Cardiac septum (tissue), 1 donor: ENCODE measurements at regions of chr17 and their contacts with region 1.

Region 1: DNA sequence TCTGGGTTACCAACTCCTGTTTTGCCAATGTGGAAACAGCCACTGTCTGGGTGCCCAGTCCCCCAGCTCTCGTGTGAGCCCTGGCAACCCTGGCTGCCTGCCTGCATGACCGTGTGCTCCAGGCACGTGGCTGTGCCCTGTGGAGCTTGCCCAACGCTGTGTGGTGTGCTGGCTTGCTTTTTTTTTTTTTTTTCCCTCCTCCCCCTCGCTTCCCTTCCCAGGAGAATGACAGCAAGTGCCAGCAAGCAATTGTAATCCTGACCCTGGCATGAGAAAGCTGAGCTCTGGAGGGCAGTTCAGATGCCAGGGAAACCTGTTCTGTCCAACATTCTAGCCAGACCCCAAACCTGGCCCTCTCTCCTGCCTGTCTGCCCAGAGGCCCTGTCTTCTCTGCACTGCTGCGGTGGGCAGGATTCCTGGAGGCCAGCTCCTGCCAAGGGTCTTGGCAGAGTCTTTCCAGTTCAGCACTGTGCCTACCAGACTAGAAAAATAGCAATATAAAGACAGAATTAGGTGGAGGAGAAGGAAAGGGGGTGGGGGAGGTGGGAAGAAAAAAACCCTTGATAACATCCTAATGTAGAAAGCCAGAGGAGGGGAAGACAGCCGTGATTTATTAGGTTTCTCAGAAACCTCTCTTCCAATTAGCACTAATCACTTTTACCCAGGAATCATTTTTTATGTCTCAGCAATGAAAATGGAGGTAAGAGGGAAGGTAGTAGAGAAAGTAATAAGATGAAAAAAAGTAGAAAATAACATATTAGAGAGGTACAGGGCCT is 9.0 kb downstream of the HLF start:
- DNase-seq: peak; percentile 86

Region 2: DNA sequence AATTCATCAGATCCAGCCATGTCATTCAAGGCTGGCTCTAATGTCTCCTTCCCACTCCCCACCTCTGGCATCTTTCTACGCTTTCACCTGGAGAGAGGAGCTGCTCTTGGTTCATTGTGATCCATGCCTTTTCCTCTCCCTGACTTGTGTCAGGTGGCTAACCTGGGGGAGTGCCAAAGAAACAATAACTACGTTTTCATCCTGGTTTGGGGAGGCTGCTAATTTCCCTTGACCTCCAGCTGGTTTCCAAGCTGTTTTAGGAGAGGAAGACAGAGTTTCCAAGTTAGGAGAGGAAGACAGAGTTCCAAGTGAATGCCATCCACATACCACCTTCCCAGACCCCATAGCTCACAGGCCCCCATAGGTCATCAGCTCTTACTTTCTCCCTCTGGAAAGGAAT is 49.0 kb before region 1 on chr17:
- intact Hi-C with region 1: no loop called
- DNase-seq: no peak

Region 3: GRCh38 chr17:55285340-55286301 is 11.9 kb after region 1 on chr17:
- intact Hi-C with region 1: loop called (anchors 2 kb)
- DNase-seq: peak; percentile 88

Region 4: GRCh38 chr17:55410722-55411462 is 137.1 kb after region 1 on chr17:
- intact Hi-C with region 1: no loop called
- DNase-seq: no peak